Activated CD4-positive, alpha-beta memory T cell treated with anti-CD3 and anti-CD28 coated beads, Interleukin-2, amount 10 ng/mL, durations not matched to agents 7 days and 5 days (primary cell): ENCODE measurements at regions of chr4 and their contacts with region 1.

Region 1: GRCh38 chr4:48127682-48128394 is 6.2 kb downstream of the TXK start:
- DNase-seq: peak; percentile 83
- H3K4me3 Mint-ChIP-seq: peak overlapping the region; percentile 50
- H3K27ac Mint-ChIP-seq: peak overlapping the region; percentile 78
- H3K4me1 Mint-ChIP-seq: peaks cover 76% of the 10 kb centered on the region
- H3K27me3 Mint-ChIP-seq: no peaks in the 10 kb centered on the region

Region 2: GRCh38 chr4:48109413-48110263 is 18.2 kb before region 1 on chr4:
- CTCF ChIA-PET with region 1: interaction called, 11 read pairs
- POLR2A ChIA-PET with region 1: interaction called, 5 read pairs
- DNase-seq: no peak
- H3K4me3 Mint-ChIP-seq: no peak overlapping the region
- H3K27ac Mint-ChIP-seq: no peak overlapping the region
- H3K4me1 Mint-ChIP-seq: peaks cover 31% of the 10 kb centered on the region
- H3K27me3 Mint-ChIP-seq: no peaks in the 10 kb centered on the region